Psoas muscle (tissue), 8 donors: ENCODE measurements at regions of chr17 and their contacts with region 1.

Region 1: GRCh38 chr17:13002766-13003451 is 14.9 kb downstream of the ELAC2 start:
- DNase-seq: peak; percentile 75 to 82
- ATAC-seq: peak; percentile 72 to 90 (median 77)
- H3K4me3 ChIP-seq: no peak overlapping the region
- H3K27ac ChIP-seq: peak overlapping the region; percentile 58
- H3K4me1 ChIP-seq: no peaks in the 10 kb centered on the region
- H3K27me3 ChIP-seq: no peaks in the 10 kb centered on the region
- CTCF ChIP-seq: peak; percentile 76

Region 2: GRCh38 chr17:12180644-12181261 is 822.2 kb before region 1 on chr17:
- intact Hi-C with region 1: loop called in 1 of 2 experiments (anchors 10 kb)
- DNase-seq: no peak
- ATAC-seq: no peak
- H3K4me3 ChIP-seq: no peak overlapping the region
- H3K27ac ChIP-seq: no peak overlapping the region
- H3K4me1 ChIP-seq: no peaks in the 10 kb centered on the region
- H3K27me3 ChIP-seq: no peaks in the 10 kb centered on the region
- CTCF ChIP-seq: peak; percentile 55

Region 3: DNA sequence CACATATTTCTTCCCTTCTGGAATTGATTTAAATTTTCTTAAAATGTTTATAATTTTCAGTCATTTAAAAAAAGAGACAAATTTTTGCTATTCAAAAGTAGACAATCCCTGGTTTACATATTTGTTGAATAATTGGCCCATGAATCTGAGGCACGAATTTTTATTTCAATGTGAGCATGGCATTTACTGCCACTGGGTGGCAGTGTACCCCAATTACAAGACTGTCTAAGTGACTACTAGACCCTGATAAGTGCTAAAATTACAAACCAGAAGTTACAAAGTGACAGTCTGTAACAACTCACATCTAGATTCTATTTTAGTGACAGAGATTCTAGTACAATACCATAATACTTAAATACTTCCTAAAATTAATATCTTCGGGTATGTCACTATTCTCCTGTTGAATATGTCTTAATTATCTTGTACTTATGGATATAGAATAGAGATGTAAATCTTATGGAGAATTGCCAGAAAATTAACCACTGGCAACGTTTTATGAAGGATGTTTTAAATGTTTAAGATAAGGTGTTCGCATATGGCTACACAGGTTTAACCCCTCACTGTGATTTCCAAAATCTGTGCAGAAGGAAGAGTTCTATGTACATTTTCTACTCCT is 746.4 kb before region 1 on chr17:
- intact Hi-C with region 1: loop called in 1 of 2 experiments (anchors 10 kb)
- DNase-seq: no peak
- ATAC-seq: no peak
- H3K4me3 ChIP-seq: no peak overlapping the region
- H3K27ac ChIP-seq: no peak overlapping the region
- H3K4me1 ChIP-seq: no peaks in the 10 kb centered on the region
- H3K27me3 ChIP-seq: no peaks in the 10 kb centered on the region
- CTCF ChIP-seq: peak; percentile 52

Region 4: DNA sequence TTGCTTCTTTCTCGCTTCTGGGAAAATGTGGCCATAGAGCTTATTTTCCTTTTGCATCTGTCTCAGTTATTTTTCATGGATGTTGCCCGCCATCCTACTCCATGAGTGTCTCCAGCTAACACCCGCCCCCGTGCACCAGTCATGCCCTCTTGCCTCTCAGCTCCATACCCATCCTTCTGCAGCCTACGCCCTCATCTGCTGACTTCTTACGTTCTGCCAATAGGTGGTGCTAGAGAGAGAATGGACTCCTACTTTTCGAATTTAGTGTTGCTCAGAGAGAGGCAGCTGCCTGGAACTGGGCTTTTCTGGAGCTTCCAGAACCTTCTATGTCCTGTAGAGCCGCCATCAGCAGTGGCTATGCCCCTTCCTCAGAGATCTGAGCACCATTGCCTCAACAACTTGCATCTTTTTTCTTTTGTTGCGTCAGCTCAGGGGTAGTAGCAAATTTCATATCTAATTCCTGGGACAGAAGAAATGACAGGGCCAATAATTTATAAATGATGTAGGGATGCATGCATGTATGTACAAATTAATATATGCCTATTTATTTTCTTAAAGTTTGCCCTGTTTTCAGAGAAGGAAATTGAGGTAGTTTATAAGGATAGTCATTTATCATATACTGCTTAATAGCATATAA is 456.9 kb before region 1 on chr17:
- intact Hi-C with region 1: loop called in 1 of 2 experiments (anchors 5 kb)
- DNase-seq: no peak
- ATAC-seq: peak in 1 of 4 donors; percentile 46
- H3K4me3 ChIP-seq: no peak overlapping the region
- H3K27ac ChIP-seq: no peak overlapping the region
- H3K4me1 ChIP-seq: no peaks in the 10 kb centered on the region
- H3K27me3 ChIP-seq: no peaks in the 10 kb centered on the region
- CTCF ChIP-seq: peak; percentile 45

Region 5: DNA sequence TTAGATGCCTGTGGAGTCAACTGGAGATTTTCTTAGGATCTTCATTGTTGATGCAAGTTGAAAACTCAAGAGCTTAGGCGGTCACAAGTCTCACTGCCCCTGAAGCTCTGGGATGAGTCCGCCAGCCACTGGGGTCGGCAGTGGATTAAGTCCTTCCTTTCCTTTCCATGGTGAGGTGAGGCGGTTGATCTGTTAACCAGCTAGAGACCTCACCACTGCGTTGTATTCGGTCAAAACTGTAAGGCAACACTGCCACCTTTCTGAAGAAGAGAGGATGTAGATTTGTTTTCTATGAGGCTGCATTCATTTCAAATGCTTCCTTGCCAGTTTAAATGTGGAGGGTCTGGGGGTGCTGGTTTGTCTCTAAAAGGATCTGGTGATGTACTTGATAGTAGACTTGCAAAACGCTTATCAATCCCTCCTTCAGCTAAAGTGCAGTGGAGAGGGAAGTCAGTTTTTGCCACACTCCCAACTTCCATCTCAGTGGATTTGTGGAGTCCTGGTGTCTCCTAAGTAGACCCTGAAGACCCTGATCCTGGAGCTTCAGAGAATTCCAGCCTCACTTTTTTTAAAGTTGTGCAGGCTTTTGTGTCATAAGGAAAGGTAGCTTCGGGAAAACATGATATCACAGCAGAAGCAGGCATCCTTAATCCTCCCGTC is 335.5 kb before region 1 on chr17:
- intact Hi-C with region 1: loop called in 1 of 2 experiments (anchors 10 kb)
- DNase-seq: no peak
- ATAC-seq: no peak
- H3K4me3 ChIP-seq: peak overlapping the region; percentile 61
- H3K27ac ChIP-seq: no peak overlapping the region
- H3K4me1 ChIP-seq: no peaks in the 10 kb centered on the region
- H3K27me3 ChIP-seq: peaks cover 0 to 29% (median 7%) of the 10 kb centered on the region in 3 donors
- CTCF ChIP-seq: peak; percentile 25

Region 6: DNA sequence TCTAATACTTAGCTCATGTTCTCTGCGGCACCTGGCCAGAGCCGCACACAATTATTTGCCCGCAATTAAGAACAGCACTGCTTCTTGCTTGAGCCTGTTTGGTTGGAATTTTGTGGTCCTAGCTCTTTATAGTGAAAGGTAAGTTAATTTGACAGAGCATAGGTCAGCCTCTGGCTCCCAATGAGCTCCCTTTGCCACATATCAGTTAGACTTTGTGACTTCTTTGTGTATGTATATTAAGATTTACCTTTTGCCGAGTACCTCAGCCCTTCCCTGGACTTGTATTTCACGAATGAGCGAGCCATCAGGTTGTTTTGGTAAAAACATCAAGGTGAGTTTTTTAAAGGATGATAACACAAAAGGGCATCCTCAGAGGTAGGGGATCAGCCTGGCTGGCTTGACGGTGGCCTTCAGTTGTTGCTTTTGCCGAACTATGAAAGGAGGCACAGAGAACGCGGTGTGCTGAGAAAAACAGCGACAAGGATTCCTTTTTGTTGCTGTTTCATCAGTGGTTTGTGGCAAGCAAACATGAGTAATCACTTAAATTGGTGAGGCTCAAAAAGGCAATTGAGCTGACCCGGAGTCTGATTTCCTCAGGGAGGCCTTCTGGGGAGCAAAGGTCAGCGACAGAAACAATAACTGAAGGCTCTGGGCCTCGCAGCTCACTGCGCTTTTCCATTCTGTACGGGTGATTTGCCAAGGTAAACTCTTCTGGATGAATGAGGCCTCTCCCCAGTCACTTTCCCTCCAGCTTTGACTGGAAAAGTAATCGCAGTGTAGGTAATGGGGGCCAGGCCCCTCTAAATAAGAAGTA is 435.3 kb after region 1 on chr17:
- intact Hi-C with region 1: no loop called
- DNase-seq: no peak
- ATAC-seq: no peak
- H3K4me3 ChIP-seq: no peak overlapping the region
- H3K27ac ChIP-seq: no peak overlapping the region
- H3K4me1 ChIP-seq: no peaks in the 10 kb centered on the region
- H3K27me3 ChIP-seq: no peaks in the 10 kb centered on the region
- CTCF ChIP-seq: no peak